Body of pancreas (tissue), 4 donors: ENCODE measurements at regions of chr2 and their contacts with region 1.

Region 1: GRCh38 chr2:159712143-159712928 is at the start of gene MARCHF7:
- DNase-seq: peak; percentile 96 to 97 (median 96)
- ATAC-seq: peak; percentile 96
- H3K4me3 ChIP-seq: peak within 1 kb of the TSS; percentile 50 to 100
- H3K27ac ChIP-seq: peak within 1 kb of the TSS; percentile 93 to 100 (median 98)
- H3K4me1 ChIP-seq: peaks cover 50% of the 10 kb centered on the region
- H3K27me3 ChIP-seq: no peaks in the 10 kb centered on the region
- CTCF ChIP-seq: peak; percentile 30 to 84 (median 69)
- POLR2A ChIP-seq: peak; percentile 94 to 99 (median 99)
- total RNA-seq, gene MARCHF7: 36.6 to 36.9 TPM

Region 2: DNA sequence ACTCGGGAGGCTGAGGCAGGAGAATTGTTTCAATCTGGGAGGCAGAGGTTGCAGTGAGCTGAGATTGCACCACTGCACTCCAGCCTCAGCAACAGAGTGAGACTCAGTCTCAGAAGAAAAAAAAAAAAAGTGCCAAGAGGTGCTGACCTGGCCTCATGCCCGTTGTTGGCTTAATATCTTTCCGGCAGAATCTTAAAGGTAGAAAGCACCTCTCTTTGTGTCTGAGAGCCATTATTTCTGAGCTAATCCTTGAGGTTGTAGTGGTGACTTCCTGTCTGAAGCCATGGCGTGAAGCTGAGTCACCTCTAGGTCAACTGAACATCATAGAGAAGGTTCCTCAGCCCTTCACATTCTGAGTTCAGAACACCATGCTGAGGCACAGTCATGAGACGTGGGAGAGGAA is 486.3 kb before region 1 on chr2:
- intact Hi-C with region 1: loop called (anchors 10 kb)
- DNase-seq: peak in 3 of 4 donors; percentile 19 to 35 (median 31)
- ATAC-seq: peak; percentile 43
- H3K4me3 ChIP-seq: no peak overlapping the region
- H3K27ac ChIP-seq: peak overlapping the region in 1 of 4 donors; percentile 51
- H3K4me1 ChIP-seq: no peaks in the 10 kb centered on the region
- H3K27me3 ChIP-seq: no peaks in the 10 kb centered on the region
- CTCF ChIP-seq: no peak
- POLR2A ChIP-seq: no peak

Region 3: GRCh38 chr2:159650574-159650973 is 61.8 kb before region 1 on chr2:
- intact Hi-C with region 1: no loop called
- DNase-seq: no peak
- ATAC-seq: no peak
- H3K4me3 ChIP-seq: no peak overlapping the region
- H3K27ac ChIP-seq: no peak overlapping the region
- H3K4me1 ChIP-seq: no peaks in the 10 kb centered on the region
- H3K27me3 ChIP-seq: no peaks in the 10 kb centered on the region
- CTCF ChIP-seq: no peak
- POLR2A ChIP-seq: no peak

Region 4: DNA sequence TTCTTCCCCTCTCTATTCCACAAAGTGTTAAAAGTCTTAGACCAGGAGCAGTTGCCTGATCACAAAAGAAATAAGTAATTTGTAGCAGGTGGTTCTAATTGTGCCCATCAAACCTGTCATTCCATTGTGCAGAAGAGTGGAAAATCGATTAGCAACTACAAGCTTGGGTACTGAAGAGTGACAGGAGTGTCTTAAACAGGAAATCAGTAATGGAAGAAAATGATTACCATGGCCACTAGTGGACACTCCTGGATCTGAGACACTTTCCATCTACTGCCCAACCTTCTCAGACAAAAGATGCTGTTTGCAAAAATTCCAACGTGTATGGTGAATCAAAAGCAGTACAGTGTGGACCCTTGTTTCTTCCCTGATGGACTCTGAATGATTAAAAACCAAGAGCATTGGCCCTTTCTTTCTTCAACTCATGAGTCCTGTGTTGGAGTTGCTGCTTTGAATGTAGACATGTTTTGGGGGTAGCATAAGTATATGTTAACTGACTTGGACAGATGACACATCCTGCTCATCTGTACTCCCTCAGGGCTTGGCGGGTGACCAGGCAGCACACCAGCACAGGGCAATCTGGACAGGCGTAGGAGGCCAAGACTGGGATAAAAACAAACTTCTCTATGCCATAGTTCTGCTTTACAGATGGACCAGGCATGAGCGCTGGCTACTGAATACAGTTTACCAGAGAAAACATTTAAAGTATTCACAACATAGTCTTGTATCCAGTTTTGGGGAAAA is 298.2 kb after region 1 on chr2:
- intact Hi-C with region 1: no loop called
- DNase-seq: no peak
- ATAC-seq: no peak
- H3K4me3 ChIP-seq: no peak overlapping the region
- H3K27ac ChIP-seq: no peak overlapping the region
- H3K4me1 ChIP-seq: no peaks in the 10 kb centered on the region
- H3K27me3 ChIP-seq: no peaks in the 10 kb centered on the region
- CTCF ChIP-seq: no peak
- POLR2A ChIP-seq: no peak